ENCODE measurements at regions of chr16 and their contacts with region 1.

Region 1: GRCh38 chr16:5234295-5235050 is 136.9 kb upstream of the EEF2KMT start:
- DNase-seq: no peak
- ATAC-seq: no peak
- H3K4me3 ChIP-seq: no peak overlapping the region
- H3K27ac ChIP-seq: no peak overlapping the region
- H3K4me1 ChIP-seq: no peaks in the 10 kb centered on the region
- H3K27me3 ChIP-seq: no peaks in the 10 kb centered on the region
- CTCF ChIP-seq: no peak
- EP300 ChIP-seq: no peak
- POLR2A ChIP-seq: no peak
- RAD21 ChIP-seq: no peak

Region 2: GRCh38 chr16:5490499-5490898 is 256.0 kb after region 1 on chr16:
- CTCF ChIA-PET with region 1: interaction called, 3 read pairs
- POLR2A ChIA-PET with region 1: no interaction called
- RAD21 ChIA-PET with region 1: no interaction called
- SMC1A ChIA-PET with region 1: no interaction called
- in situ Hi-C with region 1: no loop called
- intact Hi-C with region 1: loop called (anchors 5 kb)
- DNase-seq: no peak
- ATAC-seq: peak; percentile 36; the same call in 2 of the 3 replicates
- H3K4me3 ChIP-seq: no peak overlapping the region
- H3K27ac ChIP-seq: no peak overlapping the region
- H3K4me1 ChIP-seq: no peaks in the 10 kb centered on the region
- H3K27me3 ChIP-seq: no peaks in the 10 kb centered on the region
- CTCF ChIP-seq: peak; percentile 51 to 65 (median 60)
- EP300 ChIP-seq: no peak
- POLR2A ChIP-seq: no peak
- RAD21 ChIP-seq: peak; percentile 48